CD4-positive, alpha-beta T cell (primary cell): ENCODE measurements at regions of chr11 and their contacts with region 1.

Region 1: DNA sequence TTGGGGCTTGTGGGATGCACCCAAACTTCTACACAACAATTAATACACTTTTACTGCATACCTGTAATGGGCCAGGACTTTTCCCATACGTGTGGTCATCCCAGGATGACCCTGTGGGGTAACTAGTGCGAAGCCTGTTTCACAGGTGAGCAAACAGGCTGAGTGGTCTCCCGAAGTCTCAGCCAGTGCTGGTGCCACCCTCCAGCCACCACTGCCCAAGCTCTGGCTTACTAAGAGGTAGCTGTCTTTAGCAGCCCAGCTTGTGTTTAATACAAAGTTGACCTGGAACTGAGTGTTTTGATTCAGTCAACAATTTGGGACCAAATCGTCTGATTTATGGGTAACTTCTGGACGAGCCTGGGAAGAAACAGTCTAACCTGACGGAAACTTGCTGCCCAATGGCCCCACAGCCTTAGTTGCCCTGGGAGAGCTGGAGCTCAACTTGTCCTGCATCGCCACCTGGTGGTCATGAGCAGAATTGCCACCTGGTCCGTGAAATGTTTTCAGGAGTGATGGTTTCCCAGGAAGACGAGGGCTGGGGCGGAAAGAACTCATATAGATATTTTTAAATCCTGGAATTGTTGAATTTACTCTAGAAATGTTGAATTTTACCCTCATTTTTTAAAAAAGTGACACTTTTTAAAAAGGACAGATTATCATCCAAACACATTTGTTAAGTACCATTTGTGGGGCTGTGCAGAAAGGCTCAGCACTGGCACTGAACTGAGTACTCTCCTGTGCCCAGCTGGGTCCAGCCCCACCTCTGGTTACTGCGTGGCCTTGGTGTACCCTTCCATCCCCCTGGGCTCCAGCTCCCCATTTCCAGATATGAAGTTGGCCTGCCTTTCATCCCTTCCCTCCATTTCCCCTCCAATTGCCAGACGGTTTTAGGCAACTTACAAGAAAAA is 95.5 kb upstream of the PARVA start:
- DNase-seq: peak; percentile 66 to 86 (median 74)
- ATAC-seq: peak; percentile 65
- H3K4me3 ChIP-seq: no peak overlapping the region
- H3K4me3 Mint-ChIP-seq: no peak overlapping the region
- H3K27ac ChIP-seq: no peak overlapping the region
- H3K27ac Mint-ChIP-seq: no peak overlapping the region
- H3K4me1 ChIP-seq: no peaks in the 10 kb centered on the region
- H3K4me1 Mint-ChIP-seq: no peaks in the 10 kb centered on the region
- H3K27me3 ChIP-seq: no peaks in the 10 kb centered on the region
- H3K27me3 Mint-ChIP-seq: no peaks in the 10 kb centered on the region
- CTCF ChIP-seq: peak; percentile 99

Region 2: GRCh38 chr11:10933455-10934292 is 1348.2 kb before region 1 on chr11:
- CTCF ChIA-PET with region 1: interaction called, 3 read pairs
- POLR2A ChIA-PET with region 1: no interaction called
- intact Hi-C with region 1: loop called in 1 of 2 experiments (anchors 10 kb)
- DNase-seq: peak; percentile 67 to 90 (median 80)
- ATAC-seq: peak; percentile 89
- H3K4me3 ChIP-seq: peak overlapping the region; percentile 56
- H3K4me3 Mint-ChIP-seq: peak overlapping the region; percentile 90
- H3K27ac ChIP-seq: no peak overlapping the region
- H3K27ac Mint-ChIP-seq: peak overlapping the region; percentile 52
- H3K4me1 ChIP-seq: peaks cover 24% of the 10 kb centered on the region
- H3K4me1 Mint-ChIP-seq: peaks cover 24% of the 10 kb centered on the region
- H3K27me3 ChIP-seq: peaks cover 25 to 31% of the 10 kb centered on the region in 2 experiments
- H3K27me3 Mint-ChIP-seq: peaks cover 49% of the 10 kb centered on the region
- CTCF ChIP-seq: peak; percentile 94

Region 3: GRCh38 chr11:11798586-11799438 is 483.0 kb before region 1 on chr11:
- CTCF ChIA-PET with region 1: no interaction called
- POLR2A ChIA-PET with region 1: no interaction called
- intact Hi-C with region 1: loop called (anchors 2 kb)
- DNase-seq: peak; percentile 58 to 92 (median 76)
- ATAC-seq: peak; percentile 91
- H3K4me3 ChIP-seq: no peak overlapping the region
- H3K4me3 Mint-ChIP-seq: no peak overlapping the region
- H3K27ac ChIP-seq: no peak overlapping the region
- H3K27ac Mint-ChIP-seq: no peak overlapping the region
- H3K4me1 ChIP-seq: peaks cover 4% of the 10 kb centered on the region
- H3K4me1 Mint-ChIP-seq: no peaks in the 10 kb centered on the region
- H3K27me3 ChIP-seq: peaks cover 4 to 5% of the 10 kb centered on the region in 2 experiments
- H3K27me3 Mint-ChIP-seq: peaks cover 32% of the 10 kb centered on the region
- CTCF ChIP-seq: peak; percentile 94

Region 4: DNA sequence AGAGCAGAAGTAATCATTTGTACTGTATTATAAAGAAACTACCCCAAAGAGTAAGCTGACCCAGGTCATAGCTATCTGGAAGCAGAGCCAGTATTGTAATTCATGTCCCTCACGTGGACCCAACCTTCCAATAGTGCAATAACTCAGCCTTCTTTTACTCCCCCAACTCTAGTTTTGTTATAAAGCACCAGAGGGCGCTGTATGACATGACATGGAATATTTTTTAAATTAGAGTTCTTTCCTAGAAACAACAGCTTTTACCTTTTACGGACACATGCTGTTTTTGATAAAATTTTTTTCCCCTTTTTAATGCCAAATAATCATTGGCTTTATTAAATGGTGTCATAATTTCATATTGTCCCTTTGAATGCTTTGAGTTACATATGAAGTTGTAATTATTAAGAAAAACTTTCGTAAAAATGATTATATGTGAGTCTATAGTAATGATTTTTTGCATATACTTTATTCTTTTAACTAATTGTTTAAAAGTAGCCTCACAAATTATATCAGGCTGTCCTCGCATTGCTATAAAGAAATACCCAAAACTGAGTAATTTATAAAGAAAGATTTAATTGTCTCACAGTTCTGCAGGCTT is 350.3 kb before region 1 on chr11:
- CTCF ChIA-PET with region 1: no interaction called
- POLR2A ChIA-PET with region 1: no interaction called
- intact Hi-C with region 1: loop called (anchors 1 to 5 kb)
- DNase-seq: peak in 4 of 14 experiments; percentile 9 to 58 (median 54)
- ATAC-seq: peak; percentile 71
- H3K4me3 ChIP-seq: no peak overlapping the region
- H3K4me3 Mint-ChIP-seq: no peak overlapping the region
- H3K27ac ChIP-seq: no peak overlapping the region
- H3K27ac Mint-ChIP-seq: no peak overlapping the region
- H3K4me1 ChIP-seq: no peaks in the 10 kb centered on the region
- H3K4me1 Mint-ChIP-seq: peaks cover 3% of the 10 kb centered on the region
- H3K27me3 ChIP-seq: no peaks in the 10 kb centered on the region
- H3K27me3 Mint-ChIP-seq: no peaks in the 10 kb centered on the region
- CTCF ChIP-seq: peak; percentile 79

Region 5: GRCh38 chr11:12052676-12053605 is 228.9 kb before region 1 on chr11:
- CTCF ChIA-PET with region 1: interaction called, 27 read pairs
- POLR2A ChIA-PET with region 1: interaction called, 5 read pairs
- intact Hi-C with region 1: no loop called
- DNase-seq: peak in 5 of 14 experiments; percentile 4 to 44 (median 16)
- ATAC-seq: no peak
- H3K4me3 ChIP-seq: no peak overlapping the region
- H3K4me3 Mint-ChIP-seq: no peak overlapping the region
- H3K27ac ChIP-seq: no peak overlapping the region
- H3K27ac Mint-ChIP-seq: no peak overlapping the region
- H3K4me1 ChIP-seq: no peaks in the 10 kb centered on the region
- H3K4me1 Mint-ChIP-seq: no peaks in the 10 kb centered on the region
- H3K27me3 ChIP-seq: no peaks in the 10 kb centered on the region
- H3K27me3 Mint-ChIP-seq: no peaks in the 10 kb centered on the region
- CTCF ChIP-seq: no peak

Region 6: GRCh38 chr11:12235947-12236743 is 45.7 kb before region 1 on chr11:
- CTCF ChIA-PET with region 1: interaction called, 16 read pairs
- POLR2A ChIA-PET with region 1: interaction called, 5 read pairs
- intact Hi-C with region 1: loop called in 1 of 2 experiments (anchors 2 kb)
- DNase-seq: peak in 9 of 14 experiments; percentile 4 to 83 (median 40)
- ATAC-seq: peak; percentile 85
- H3K4me3 ChIP-seq: peak overlapping the region; percentile 7
- H3K4me3 Mint-ChIP-seq: peak overlapping the region; percentile 82
- H3K27ac ChIP-seq: peak overlapping the region in 1 of 2 donors; percentile 59
- H3K27ac Mint-ChIP-seq: peak overlapping the region; percentile 92
- H3K4me1 ChIP-seq: peaks cover 15% of the 10 kb centered on the region
- H3K4me1 Mint-ChIP-seq: peaks cover 30% of the 10 kb centered on the region
- H3K27me3 ChIP-seq: no peaks in the 10 kb centered on the region
- H3K27me3 Mint-ChIP-seq: no peaks in the 10 kb centered on the region
- CTCF ChIP-seq: peak; percentile 92

Region 7: DNA sequence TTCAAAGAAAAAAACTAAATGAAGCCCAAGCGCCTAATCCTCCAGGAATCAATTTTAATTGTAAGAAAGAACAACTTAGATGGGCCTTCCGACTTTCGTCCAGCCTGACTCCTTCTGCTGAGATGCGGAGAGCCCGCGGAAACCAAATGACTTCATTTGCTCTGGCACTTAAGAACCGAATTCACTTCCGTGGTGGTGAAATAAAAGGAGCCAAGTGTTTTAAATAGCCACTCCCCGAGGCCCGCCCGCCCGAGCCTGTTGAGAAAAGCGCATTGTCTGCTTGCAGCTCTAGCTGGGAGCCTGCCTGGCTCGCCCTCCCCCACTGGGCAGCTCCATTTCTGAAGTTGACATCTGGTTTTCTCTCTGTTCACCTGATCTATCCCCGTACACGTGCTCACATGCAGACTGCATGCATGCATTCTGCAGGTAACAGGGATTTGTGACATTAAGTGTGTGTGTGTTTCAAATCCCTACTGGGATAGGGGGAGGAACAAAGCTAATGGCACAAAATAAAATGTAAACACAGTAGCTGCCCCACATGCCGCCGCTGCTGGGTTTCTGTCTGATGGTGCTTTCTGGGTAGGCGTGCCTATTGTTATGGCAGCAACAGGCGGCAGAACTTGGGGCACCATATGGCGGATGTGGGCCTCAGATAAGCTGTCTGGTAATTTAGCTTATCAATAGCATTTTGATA is 398.6 kb after region 1 on chr11:
- CTCF ChIA-PET with region 1: no interaction called
- POLR2A ChIA-PET with region 1: no interaction called
- intact Hi-C with region 1: no loop called
- DNase-seq: peak in 5 of 14 experiments; percentile 3 to 37 (median 17)
- ATAC-seq: peak; percentile 71
- H3K4me3 ChIP-seq: no peak overlapping the region
- H3K4me3 Mint-ChIP-seq: no peak overlapping the region
- H3K27ac ChIP-seq: no peak overlapping the region
- H3K27ac Mint-ChIP-seq: no peak overlapping the region
- H3K4me1 ChIP-seq: peaks cover 6% of the 10 kb centered on the region
- H3K4me1 Mint-ChIP-seq: peaks cover 10% of the 10 kb centered on the region
- H3K27me3 ChIP-seq: peaks cover 29 to 92% of the 10 kb centered on the region in 2 experiments
- H3K27me3 Mint-ChIP-seq: peaks cover 96% of the 10 kb centered on the region
- CTCF ChIP-seq: no peak